ENCODE measurements at regions of chr19 and their contacts with region 1.

Region 1: GRCh38 chr19:38634757-38635482 is 12.5 kb upstream of the ACTN4 start:
- DNase-seq: peak; percentile 75 to 86
- H3K4me3 ChIP-seq: no peak overlapping the region
- H3K4me3 Mint-ChIP-seq: no peak overlapping the region
- H3K27ac Mint-ChIP-seq: peak overlapping the region; percentile 58
- H3K4me1 ChIP-seq: peaks cover 59% of the 10 kb centered on the region
- H3K4me1 Mint-ChIP-seq: peaks cover 28% of the 10 kb centered on the region
- H3K27me3 ChIP-seq: no peaks in the 10 kb centered on the region
- H3K27me3 Mint-ChIP-seq: no peaks in the 10 kb centered on the region
- CTCF ChIP-seq: peak; percentile 95 to 97

Region 2: GRCh38 chr19:38514812-38515633 is 119.9 kb before region 1 on chr19:
- CTCF ChIA-PET with region 1: no interaction called
- POLR2A ChIA-PET with region 1: no interaction called
- intact Hi-C with region 1: loop called (anchors 10 kb)
- DNase-seq: peak; percentile 71 to 83
- H3K4me3 ChIP-seq: no peak overlapping the region
- H3K4me3 Mint-ChIP-seq: peak overlapping the region; percentile 20
- H3K27ac Mint-ChIP-seq: no peak overlapping the region
- H3K4me1 ChIP-seq: no peaks in the 10 kb centered on the region
- H3K4me1 Mint-ChIP-seq: no peaks in the 10 kb centered on the region
- H3K27me3 ChIP-seq: no peaks in the 10 kb centered on the region
- H3K27me3 Mint-ChIP-seq: peaks cover 4% of the 10 kb centered on the region
- CTCF ChIP-seq: peak; percentile 94

Region 3: DNA sequence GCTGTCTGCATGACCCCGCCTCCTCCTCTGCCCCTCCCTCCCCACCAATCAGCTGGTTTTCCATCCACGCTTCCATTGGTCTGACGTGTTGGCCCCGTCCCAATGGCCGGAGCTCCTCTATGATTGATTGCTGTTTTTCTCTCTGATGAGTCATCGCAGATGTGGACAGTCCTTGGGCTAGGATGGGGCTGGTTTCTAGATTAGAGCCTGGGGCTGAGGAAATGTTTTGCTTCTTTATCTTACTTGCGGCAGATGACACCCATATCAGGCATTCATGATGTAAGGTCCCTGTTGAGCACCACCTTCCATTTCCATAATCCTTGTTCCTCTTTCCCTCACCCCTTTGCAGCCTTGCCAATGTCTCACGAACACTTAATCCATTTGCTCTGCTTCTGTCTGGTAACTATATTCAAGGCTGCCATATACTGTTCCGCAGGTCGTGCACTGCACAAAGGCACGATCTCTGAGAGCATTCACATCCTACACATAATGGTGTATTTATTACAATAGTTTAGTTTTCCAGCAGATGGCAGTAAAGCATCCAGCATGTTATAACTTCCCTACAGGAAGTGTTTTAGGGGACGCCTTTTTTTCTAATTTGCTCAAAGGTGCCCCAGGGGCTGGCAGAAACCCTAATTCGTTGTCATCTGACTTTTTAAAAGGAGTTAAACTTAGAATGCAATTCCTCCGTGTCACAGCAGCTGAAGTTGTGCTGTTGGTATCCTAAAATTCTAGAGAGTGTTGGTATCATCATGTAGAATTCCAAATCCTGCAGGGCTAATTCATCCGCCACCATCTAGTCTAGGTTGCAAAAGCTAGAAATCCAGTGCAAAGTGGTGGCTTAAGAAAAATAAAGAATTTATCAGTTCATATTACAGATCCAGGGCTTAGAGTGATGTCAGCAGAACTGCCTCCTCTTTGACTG is 90.6 kb before region 1 on chr19:
- CTCF ChIA-PET with region 1: interaction called, 3 read pairs
- POLR2A ChIA-PET with region 1: no interaction called
- intact Hi-C with region 1: loop called (anchors 1 kb)
- DNase-seq: peak; percentile 69 to 82
- H3K4me3 ChIP-seq: peak overlapping the region; percentile 24; the same call in 1 of the 2 replicates
- H3K4me3 Mint-ChIP-seq: peak overlapping the region; percentile 44
- H3K27ac Mint-ChIP-seq: no peak overlapping the region
- H3K4me1 ChIP-seq: 0 out of 2 replicates have a peak, but pooled peaks cover 9% of the 10 kb centered on the region
- H3K4me1 Mint-ChIP-seq: peaks cover 6% of the 10 kb centered on the region
- H3K27me3 ChIP-seq: no peaks in the 10 kb centered on the region
- H3K27me3 Mint-ChIP-seq: no peaks in the 10 kb centered on the region
- CTCF ChIP-seq: peak; percentile 47 to 71

Region 4: GRCh38 chr19:38618590-38619360 is 16.1 kb before region 1 on chr19 and contains the start of gene EIF3K:
- CTCF ChIA-PET with region 1: interaction called, 25 read pairs
- POLR2A ChIA-PET with region 1: interaction called, 6 read pairs
- intact Hi-C with region 1: no loop called
- DNase-seq: peak; percentile 99 to 100
- H3K4me3 ChIP-seq: peak within 1 kb of the TSS; percentile 81
- H3K4me3 Mint-ChIP-seq: peak within 1 kb of the TSS; percentile 99
- H3K27ac Mint-ChIP-seq: peak within 1 kb of the TSS; percentile 99
- H3K4me1 ChIP-seq: no peaks in the 10 kb centered on the region
- H3K4me1 Mint-ChIP-seq: peaks cover 7% of the 10 kb centered on the region
- H3K27me3 ChIP-seq: no peaks in the 10 kb centered on the region
- H3K27me3 Mint-ChIP-seq: no peaks in the 10 kb centered on the region
- CTCF ChIP-seq: no peak
- total RNA-seq, gene EIF3K: 354 and 380 TPM in 2 replicates

Region 5: GRCh38 chr19:38683393-38684080 is 48.6 kb after region 1 on chr19:
- CTCF ChIA-PET with region 1: interaction called, 7 read pairs
- POLR2A ChIA-PET with region 1: no interaction called
- intact Hi-C with region 1: loop called (anchors 1 kb)
- DNase-seq: peak; percentile 96 to 98
- H3K4me3 ChIP-seq: no peak overlapping the region
- H3K4me3 Mint-ChIP-seq: peak overlapping the region; percentile 57
- H3K27ac Mint-ChIP-seq: peak overlapping the region; percentile 95
- H3K4me1 ChIP-seq: peaks cover 70% of the 10 kb centered on the region
- H3K4me1 Mint-ChIP-seq: peaks cover 81% of the 10 kb centered on the region
- H3K27me3 ChIP-seq: no peaks in the 10 kb centered on the region
- H3K27me3 Mint-ChIP-seq: no peaks in the 10 kb centered on the region
- CTCF ChIP-seq: no peak

Region 6: DNA sequence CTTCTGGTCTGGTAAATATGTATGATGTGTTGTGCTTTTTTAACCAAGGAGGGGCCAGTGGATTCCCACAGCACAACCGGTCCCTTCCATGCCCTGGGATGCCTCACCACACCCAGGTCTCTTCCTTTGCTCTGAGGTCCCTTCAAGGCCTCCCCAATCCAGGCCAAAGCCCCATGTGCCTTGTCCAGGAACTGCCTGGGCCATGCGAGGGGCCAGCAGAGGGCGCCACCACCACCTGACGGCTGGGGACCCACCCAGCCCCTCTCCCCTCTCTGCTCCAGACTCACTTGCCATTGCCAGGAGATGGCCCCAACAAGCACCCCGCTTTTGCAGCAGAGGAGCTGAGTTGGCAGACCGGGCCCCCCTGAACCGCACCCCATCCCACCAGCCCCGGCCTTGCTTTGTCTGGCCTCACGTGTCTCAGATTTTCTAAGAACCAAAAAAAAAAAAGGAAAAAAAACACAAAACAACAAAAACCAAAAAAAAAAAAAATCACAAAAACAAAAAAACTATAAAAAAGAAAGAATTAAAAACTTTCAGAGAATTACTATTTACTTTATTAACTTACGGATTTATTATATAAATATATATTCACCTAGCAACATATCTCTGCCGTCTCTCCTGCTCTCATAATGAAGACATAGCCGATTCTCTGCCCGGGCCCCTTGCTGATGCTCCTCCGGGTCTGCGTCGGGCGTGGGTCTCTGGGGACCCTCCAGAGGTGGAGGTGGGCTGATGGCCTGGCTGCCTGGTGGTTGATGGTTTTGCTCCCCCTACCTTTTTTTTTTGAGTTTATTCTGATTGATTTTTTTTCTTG is 94.9 kb after region 1 on chr19:
- CTCF ChIA-PET with region 1: interaction called, 3 read pairs
- POLR2A ChIA-PET with region 1: interaction called, 11 read pairs
- intact Hi-C with region 1: no loop called
- DNase-seq: peak; percentile 87 to 92
- H3K4me3 ChIP-seq: no peak overlapping the region
- H3K4me3 Mint-ChIP-seq: peak overlapping the region; percentile 29
- H3K27ac Mint-ChIP-seq: peak overlapping the region; percentile 53
- H3K4me1 ChIP-seq: peaks cover 7% of the 10 kb centered on the region; the same call in 1 of the 2 replicates
- H3K4me1 Mint-ChIP-seq: peaks cover 29% of the 10 kb centered on the region
- H3K27me3 ChIP-seq: no peaks in the 10 kb centered on the region
- H3K27me3 Mint-ChIP-seq: no peaks in the 10 kb centered on the region
- CTCF ChIP-seq: peak; percentile 94 to 95

Region 7: GRCh38 chr19:38838573-38839269 is 203.8 kb after region 1 on chr19:
- CTCF ChIA-PET with region 1: interaction called, 3 read pairs
- POLR2A ChIA-PET with region 1: no interaction called
- intact Hi-C with region 1: loop called (anchors 2 kb)
- DNase-seq: peak; percentile 59 to 80
- H3K4me3 ChIP-seq: no peak overlapping the region
- H3K4me3 Mint-ChIP-seq: peak overlapping the region; percentile 12
- H3K27ac Mint-ChIP-seq: peak overlapping the region; percentile 65
- H3K4me1 ChIP-seq: peaks cover 32% of the 10 kb centered on the region
- H3K4me1 Mint-ChIP-seq: peaks cover 25% of the 10 kb centered on the region
- H3K27me3 ChIP-seq: no peaks in the 10 kb centered on the region
- H3K27me3 Mint-ChIP-seq: no peaks in the 10 kb centered on the region
- CTCF ChIP-seq: peak in 1 of 2 experiments; percentile 13

Measured in Caco-2 (cell line).